AG04450 (cell line): ENCODE measurements at regions of chr1 and their contacts with region 1.

Region 1: GRCh38 chr1:218983887-218984286 is 189.8 kb upstream of the LYPLAL1 start:
- DNase-seq: no peak
- H3K4me3 ChIP-seq: no peak overlapping the region
- H3K27ac ChIP-seq: no peak overlapping the region
- H3K27me3 ChIP-seq: no peaks in the 10 kb centered on the region
- CTCF ChIP-seq: peak; percentile 30; the same call in 1 of the 2 replicates

Region 2: DNA sequence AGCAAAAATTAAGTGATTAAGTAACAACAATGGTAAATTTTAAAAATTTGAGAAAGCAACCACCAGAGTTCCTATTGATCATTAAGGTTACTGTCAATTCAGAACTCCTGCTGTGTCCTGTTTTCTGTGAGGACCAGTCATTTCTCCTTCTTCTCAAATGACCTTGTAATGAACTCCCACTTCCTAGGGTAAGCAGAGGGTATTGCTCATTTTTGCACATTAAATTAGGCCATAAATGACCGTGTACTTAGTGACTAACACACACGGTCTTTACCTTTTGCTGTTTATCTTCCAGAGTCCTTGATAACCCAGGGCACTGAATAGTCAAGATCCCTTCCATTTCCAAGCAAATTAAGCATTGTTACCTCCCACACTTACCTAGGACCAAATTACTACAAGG is 37.7 kb before region 1 on chr1:
- CTCF ChIA-PET with region 1: no interaction called
- POLR2A ChIA-PET with region 1: interaction called, 10 read pairs
- DNase-seq: no peak
- H3K4me3 ChIP-seq: no peak overlapping the region
- H3K27ac ChIP-seq: no peak overlapping the region
- H3K27me3 ChIP-seq: peaks cover 2% of the 10 kb centered on the region
- CTCF ChIP-seq: no peak

Region 3: DNA sequence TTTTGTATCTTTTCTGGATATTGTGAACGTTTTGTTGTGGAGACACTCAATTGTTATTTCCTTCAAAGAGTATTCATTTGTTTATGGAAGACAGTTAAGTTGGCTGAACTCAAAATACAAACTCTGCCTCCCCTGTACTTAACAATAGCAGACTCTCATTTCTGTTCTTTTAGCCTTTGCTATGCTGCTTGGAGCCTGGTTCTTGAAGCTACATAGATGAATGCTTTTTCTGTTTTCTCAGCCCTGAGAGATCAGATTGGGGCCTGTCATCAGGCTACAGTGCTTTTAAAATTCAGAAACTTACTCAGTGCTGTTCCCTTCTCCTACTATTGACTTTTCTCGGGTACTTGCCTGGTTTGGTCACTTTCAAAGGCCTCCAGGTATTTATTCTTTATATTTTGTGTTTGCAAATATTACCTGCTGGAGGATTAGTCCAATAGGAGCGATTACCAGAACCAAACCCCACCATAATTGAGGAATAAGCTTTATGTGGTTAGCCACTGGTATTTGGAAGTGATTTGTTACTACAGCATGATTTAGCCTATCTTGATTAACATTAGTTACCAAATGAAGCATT is 25.8 kb before region 1 on chr1:
- CTCF ChIA-PET with region 1: no interaction called
- POLR2A ChIA-PET with region 1: no interaction called
- DNase-seq: no peak
- H3K4me3 ChIP-seq: no peak overlapping the region
- H3K27ac ChIP-seq: no peak overlapping the region
- H3K27me3 ChIP-seq: no peaks in the 10 kb centered on the region
- CTCF ChIP-seq: no peak